Activated CD4-positive, alpha-beta T cell treated with anti-CD3 and anti-CD28 coated beads for 36 hours (primary cell): ENCODE measurements at regions of chr1 and their contacts with region 1.

Region 1: DNA sequence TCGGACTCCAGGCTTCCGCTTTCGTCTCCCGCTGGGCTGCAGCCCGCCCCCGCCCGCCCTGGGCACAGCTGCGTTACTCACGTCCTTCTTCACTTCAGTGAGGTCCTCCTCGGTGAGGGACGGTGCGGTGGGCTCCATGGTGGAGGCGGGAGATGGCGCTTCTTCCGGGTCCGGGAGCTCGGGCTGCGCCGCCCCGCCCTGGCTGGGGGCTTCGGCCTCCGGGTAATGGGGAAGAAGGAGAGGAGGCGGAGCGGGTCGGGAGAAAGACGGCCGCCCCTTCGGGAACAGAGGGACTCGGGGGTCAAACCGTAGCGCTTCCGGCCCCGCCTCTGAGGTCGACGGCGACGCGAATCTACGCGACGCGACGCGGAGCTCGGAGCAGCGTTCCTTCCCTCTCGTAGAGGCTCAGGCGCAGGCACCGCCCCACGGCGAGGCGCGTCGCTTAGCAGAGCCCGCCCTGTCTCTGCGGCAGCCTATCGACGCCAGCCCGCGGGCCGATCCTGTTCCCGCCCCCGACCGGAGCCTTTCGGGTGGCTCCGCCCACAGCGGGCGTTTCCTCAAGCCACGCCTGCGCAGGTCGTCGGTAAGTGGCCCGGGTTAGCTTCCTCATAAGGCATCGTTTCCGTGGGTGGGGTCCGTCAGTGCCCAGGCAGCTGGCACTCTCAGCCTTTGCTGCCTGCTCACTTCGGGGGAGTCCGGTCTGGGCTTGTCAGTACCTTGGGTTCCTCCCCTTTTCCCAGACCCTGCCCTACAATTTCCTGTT is at the start of gene BCL10:
- DNase-seq: peak; percentile 99
- ATAC-seq: peak; percentile 97
- H3K4me3 Mint-ChIP-seq: peak within 1 kb of the TSS; percentile 84
- H3K27ac Mint-ChIP-seq: peak within 1 kb of the TSS; percentile 94
- H3K4me1 Mint-ChIP-seq: peaks cover 52% of the 10 kb centered on the region
- H3K27me3 Mint-ChIP-seq: peaks cover 4% of the 10 kb centered on the region
- total RNA-seq, gene BCL10: 28.3 to 28.8 TPM

Region 2: GRCh38 chr1:84573967-84574842 is 702.2 kb before region 1 on chr1 and contains the start of gene CTBS:
- CTCF ChIA-PET with region 1: no interaction called
- POLR2A ChIA-PET with region 1: interaction called, 5 read pairs
- intact Hi-C with region 1: loop called (anchors 5 kb)
- DNase-seq: peak; percentile 94
- ATAC-seq: peak; percentile 85
- H3K4me3 Mint-ChIP-seq: peak within 1 kb of the TSS; percentile 97
- H3K27ac Mint-ChIP-seq: peak within 1 kb of the TSS; percentile 99
- H3K4me1 Mint-ChIP-seq: peaks cover 45% of the 10 kb centered on the region
- H3K27me3 Mint-ChIP-seq: no peaks in the 10 kb centered on the region
- total RNA-seq, gene CTBS: 13.5 to 17.3 TPM

Region 3: DNA sequence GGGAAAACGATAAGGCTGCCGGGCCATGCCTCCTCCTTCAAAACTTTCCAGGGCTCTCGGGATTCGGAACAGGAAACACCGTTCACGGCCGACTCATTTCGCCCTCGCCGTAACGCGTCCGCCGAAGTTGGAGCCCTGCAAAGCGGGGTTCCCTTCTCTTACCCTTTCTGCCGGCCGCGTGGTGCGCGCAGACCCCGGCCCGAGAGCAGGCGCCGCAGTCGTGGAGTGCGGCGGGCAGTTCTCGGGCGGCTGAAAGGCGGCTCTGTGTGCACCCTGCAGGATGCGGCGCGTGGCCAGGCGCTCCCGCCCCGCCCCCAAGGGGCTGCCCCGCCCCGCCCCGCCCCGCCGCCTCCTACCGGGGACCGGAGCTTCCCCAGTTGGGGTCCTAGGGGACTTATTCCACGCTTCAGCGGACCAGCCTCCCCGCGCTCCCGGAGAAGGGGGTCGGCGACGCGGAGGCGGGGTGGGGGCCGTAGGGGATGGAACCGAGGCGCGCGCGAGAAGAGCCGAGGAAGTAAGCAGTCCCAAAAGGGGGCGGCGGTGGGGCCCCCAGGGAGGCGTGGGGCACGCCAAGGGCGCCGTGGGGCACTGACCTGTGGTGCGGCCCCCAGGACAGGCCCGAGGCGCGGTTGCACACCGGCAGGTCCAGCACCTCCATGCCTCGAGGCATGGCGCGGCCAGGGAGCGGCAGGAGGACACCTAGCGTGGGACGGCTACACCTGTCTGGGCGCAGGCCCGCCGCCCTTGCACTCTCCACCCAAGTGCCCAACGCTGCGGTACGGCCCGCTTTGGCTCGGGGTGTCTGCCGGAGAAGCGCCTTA is 279.3 kb before region 1 on chr1 and contains the start of gene MCOLN2:
- CTCF ChIA-PET with region 1: no interaction called
- POLR2A ChIA-PET with region 1: no interaction called
- intact Hi-C with region 1: loop called in 1 of 2 experiments (anchors 5 kb)
- DNase-seq: peak; percentile 75
- ATAC-seq: peak; percentile 54
- H3K4me3 Mint-ChIP-seq: peak within 1 kb of the TSS; percentile 80
- H3K27ac Mint-ChIP-seq: peak within 1 kb of the TSS; percentile 81
- H3K4me1 Mint-ChIP-seq: peaks cover 45% of the 10 kb centered on the region
- H3K27me3 Mint-ChIP-seq: peaks cover 22% of the 10 kb centered on the region
- total RNA-seq, gene MCOLN2: 32.9 to 43.5 TPM

Region 4: GRCh38 chr1:85297855-85298629 is 21.6 kb after region 1 on chr1:
- CTCF ChIA-PET with region 1: interaction called, 6 read pairs
- POLR2A ChIA-PET with region 1: interaction called, 11 read pairs
- intact Hi-C with region 1: loop called (anchors 1 kb)
- DNase-seq: peak; percentile 88
- ATAC-seq: peak; percentile 93
- H3K4me3 Mint-ChIP-seq: peak overlapping the region; percentile 56
- H3K27ac Mint-ChIP-seq: peak overlapping the region; percentile 72
- H3K4me1 Mint-ChIP-seq: peaks cover 26% of the 10 kb centered on the region
- H3K27me3 Mint-ChIP-seq: peaks cover 30% of the 10 kb centered on the region

Region 5: GRCh38 chr1:86380257-86380861 is 1104.0 kb after region 1 on chr1:
- CTCF ChIA-PET with region 1: no interaction called
- POLR2A ChIA-PET with region 1: no interaction called
- intact Hi-C with region 1: loop called in 1 of 2 experiments (anchors 10 kb)
- DNase-seq: no peak
- ATAC-seq: peak; percentile 51
- H3K4me3 Mint-ChIP-seq: no peak overlapping the region
- H3K27ac Mint-ChIP-seq: no peak overlapping the region
- H3K4me1 Mint-ChIP-seq: peaks cover 8% of the 10 kb centered on the region
- H3K27me3 Mint-ChIP-seq: no peaks in the 10 kb centered on the region